ENCODE measurements at regions of chr6 and their contacts with region 1.

Region 1: GRCh38 chr6:146543211-146543939 is at the start of gene RAB32:
- DNase-seq: peak; percentile 99
- ATAC-seq: peak; percentile 100
- total RNA-seq, gene RAB32: 7.6 TPM

Region 2: DNA sequence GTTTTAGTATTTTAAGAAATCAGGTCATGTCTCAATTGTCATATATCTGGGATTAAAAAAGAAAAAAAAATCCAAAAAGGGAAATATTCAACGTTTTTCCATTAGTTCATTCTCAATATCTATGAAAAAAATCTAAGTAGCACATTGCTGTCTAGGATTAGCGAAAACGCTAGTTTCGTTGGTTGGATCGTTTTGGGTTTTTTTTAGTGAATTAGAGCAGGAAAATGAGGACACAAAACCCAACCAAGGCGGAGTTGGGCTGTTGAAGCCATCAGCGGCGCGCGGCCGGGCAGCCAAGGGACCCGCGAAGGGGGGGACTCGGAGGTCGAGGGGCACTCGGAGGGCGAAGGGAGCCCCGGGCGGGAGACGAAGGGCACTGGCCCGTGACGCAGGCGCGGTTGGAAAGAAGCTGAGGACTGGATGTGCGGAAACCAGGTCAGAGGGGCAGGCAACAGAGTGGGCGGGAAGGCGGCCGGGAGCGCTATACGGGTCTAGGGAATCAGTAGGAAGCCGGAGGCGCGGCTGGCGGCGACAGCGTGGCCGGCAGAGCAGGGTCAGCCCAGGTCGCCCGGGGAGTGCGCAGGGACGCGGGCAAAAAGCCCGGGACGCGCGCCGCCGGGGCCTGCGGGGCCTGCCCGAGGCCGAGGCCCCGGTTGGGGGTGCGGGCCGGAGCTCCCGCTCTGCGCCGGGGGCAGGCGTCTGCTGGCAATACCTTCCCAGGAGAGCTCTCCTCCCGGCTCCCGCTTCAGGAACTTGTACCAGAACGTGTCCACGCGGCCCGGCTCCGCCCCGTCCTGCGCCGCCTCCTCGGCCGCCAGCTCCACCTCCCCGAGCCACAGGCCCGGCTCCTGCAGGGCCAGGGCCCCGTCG is 808.7 kb before region 1 on chr6:
- intact Hi-C with region 1: loop called (anchors 10 kb)
- DNase-seq: peak; percentile 95
- ATAC-seq: peak; percentile 93

Region 3: GRCh38 chr6:145814501-145815308 is 728.7 kb before region 1 on chr6 and contains the start of gene FBXO30:
- intact Hi-C with region 1: loop called (anchors 10 kb)
- DNase-seq: peak; percentile 93
- ATAC-seq: peak; percentile 98
- total RNA-seq, gene FBXO30: 13.1 TPM

Region 4: DNA sequence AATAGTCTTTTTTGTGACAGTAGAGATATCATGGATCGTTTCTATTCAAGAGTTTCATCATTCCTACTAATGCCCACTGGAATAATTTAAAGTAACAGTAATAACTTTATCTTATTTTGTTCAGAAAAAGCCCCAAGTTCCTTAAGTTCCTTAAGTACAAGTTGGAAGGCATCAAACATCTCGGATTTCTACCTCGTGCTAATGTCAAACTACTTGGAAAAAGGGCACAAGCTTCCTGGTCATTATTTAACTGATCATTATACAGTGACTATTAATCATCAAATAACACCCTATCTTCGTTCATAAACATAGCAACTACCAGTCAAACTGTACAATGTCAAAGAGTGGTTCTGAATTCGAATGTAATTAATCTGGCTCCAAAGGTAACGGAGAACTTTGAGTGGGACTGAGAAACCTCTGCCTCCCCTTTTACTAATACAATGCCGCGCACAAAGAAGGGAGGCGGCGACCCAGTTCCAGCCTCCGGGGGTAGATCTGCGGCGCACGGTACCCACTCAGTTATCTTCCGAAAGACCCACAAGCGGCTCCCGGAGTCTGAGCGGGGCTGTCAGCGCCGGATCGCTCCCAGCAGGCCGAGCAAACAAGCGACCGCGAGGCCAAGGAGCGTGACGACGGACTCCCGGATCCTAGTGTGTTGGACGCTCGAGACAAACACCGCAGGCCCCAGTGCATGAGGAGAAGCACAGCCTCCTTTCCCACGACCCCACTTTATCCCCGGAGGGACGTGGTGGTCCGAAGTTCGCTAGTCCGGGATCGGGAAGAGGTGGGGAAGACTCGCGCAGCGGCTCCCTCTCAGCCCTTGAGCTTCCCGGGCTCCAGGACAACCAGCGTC is 579.9 kb before region 1 on chr6:
- intact Hi-C with region 1: loop called (anchors 5 kb)
- DNase-seq: peak; percentile 78
- ATAC-seq: peak; percentile 33

Region 5: DNA sequence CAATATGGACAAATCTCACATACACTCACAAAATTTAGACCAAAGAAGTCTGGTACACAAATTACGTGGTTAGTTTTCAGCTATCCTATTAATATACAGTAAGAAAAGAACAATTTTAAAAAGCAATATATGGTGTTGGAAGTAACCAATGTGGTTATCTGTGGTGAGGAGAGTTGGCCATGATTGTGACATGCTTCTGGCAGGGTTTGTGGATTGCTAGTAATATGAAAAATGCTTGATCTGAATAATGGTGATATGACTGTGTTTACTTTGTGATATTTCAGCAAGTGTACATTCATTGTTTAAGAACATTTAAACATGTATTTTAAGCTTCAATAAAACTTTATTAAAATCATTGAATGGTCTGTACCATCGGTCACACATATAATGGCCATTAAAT is 154.5 kb after region 1 on chr6:
- intact Hi-C with region 1: loop called (anchors 5 kb)
- DNase-seq: no peak
- ATAC-seq: no peak

Region 6: DNA sequence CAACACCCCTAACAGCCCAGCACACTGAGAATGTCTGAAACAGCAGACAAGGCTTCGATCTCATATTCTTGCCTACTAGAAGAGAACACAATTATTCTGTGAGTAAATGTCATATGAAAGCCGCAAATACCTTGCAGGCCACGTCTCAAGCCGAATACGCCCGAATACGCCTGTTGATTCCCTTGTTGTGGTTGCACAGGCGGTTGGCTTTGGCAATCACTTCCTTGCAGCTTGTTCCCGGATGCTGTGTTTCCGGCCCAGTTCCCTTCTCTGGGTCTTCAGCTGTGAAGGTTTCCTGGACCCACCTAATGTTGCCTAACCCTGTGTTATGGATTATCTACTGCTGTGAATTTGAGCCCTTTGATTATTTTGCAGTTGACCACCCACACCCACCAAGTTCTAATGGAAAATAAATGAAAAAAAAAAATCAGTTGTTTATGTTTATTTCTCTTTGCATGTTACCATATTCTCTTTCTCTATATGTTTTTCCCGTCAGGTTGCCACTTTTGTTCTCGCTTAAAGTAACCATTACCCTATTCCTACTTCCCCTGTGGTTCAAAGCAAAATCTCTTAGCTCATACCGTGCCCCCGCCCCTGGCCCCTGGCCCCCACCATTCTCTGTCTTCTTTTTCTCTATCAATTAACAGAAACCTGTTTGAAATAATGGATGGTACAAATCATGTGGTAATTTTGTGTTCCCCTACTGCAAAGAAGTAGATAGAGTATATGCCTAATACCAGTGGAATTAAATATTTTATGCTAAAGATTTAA is 227.8 kb after region 1 on chr6:
- intact Hi-C with region 1: loop called (anchors 5 kb)
- DNase-seq: peak; percentile 84
- ATAC-seq: peak; percentile 79

Region 7: DNA sequence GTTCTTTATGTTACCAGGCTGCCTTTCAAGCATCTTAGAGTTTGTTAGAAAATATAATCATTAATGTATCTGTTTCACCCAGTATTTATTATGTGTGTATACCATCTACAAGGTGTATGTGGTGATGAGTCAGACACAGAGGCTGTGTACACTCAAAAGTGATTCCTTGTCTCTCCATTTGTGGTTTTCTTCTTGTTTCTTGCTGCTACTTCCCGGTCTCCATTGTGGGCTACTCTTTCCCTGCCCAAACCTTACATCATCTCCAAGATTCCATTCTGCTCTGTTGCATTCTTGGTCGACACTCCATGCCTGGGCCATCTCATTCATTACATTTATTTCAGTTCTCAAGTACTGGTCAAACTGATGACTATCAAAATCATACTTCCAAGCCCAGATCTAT is 478.7 kb after region 1 on chr6:
- intact Hi-C with region 1: no loop called
- DNase-seq: no peak
- ATAC-seq: no peak